Dendritic cell treated with granulocyte-macrophage colony-stimulating factor and Interleukin-4, amounts not matched to agents 40 ng/mL and 50 ng/mL, for 4 days (primary cell): ENCODE measurements at regions of chr14 and their contacts with region 1.

Region 1: DNA sequence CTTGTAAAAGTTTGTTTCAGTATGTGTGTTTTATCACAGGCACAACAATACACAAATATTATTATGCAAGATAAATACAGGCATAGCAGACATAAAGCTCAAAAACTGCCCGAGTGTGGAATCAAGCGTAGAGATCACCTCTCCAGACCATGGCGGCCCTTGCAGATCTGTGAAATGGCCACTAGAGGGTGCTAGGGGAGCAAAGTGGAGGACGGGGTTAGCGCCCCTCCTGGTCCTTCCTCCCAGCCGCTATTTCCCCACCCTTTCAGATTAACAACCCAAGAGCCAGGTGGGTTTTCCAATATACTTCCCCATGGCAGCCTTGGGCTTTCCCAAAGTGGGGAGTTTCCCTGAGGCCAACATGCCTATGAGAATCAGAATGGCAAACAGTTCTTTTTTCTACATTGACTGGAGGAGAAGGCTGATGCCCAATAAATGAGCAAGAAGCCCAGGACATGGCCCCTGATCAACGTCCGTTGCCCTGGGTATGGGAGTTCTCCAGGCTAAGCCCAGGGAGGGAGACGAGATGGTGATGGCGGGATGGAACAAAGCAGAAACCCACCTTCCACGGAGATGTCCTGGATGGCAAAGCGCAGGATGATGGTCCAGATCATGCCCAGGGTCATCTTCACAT is 67.4 kb downstream of the ACTN1 start:
- H3K4me3 Mint-ChIP-seq: no peak overlapping the region
- H3K27ac Mint-ChIP-seq: no peak overlapping the region
- H3K4me1 Mint-ChIP-seq: peaks cover 42% of the 10 kb centered on the region
- H3K27me3 Mint-ChIP-seq: no peaks in the 10 kb centered on the region

Region 2: DNA sequence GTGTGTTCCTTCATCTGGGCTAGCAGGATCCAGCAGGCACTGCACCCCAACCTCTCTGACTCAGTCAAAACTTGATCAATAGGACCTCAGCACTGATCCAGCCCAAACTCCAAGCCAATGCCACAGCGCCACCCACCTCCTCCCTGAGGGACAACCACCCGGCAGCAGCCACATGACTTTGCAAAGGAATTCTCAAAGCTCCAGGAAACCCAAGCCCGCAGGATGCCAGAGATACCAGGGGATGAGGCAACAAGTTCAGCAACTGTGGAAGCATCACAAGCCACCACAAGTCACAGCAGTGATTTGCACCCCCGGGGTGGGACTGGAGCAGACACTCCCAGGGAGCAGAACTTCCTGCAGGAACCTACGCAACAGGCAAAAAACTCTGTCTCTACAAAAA is 30.1 kb after region 1 on chr14:
- intact Hi-C with region 1: loop called (anchors 2 kb)
- H3K4me3 Mint-ChIP-seq: peak overlapping the region; percentile 7
- H3K27ac Mint-ChIP-seq: peak overlapping the region; percentile 61
- H3K4me1 Mint-ChIP-seq: peaks cover 92% of the 10 kb centered on the region
- H3K27me3 Mint-ChIP-seq: no peaks in the 10 kb centered on the region

Region 3: GRCh38 chr14:69090187-69090789 is 178.6 kb after region 1 on chr14:
- intact Hi-C with region 1: loop called (anchors 5 kb)
- H3K4me3 Mint-ChIP-seq: no peak overlapping the region
- H3K27ac Mint-ChIP-seq: no peak overlapping the region
- H3K4me1 Mint-ChIP-seq: no peaks in the 10 kb centered on the region
- H3K27me3 Mint-ChIP-seq: no peaks in the 10 kb centered on the region